CD4-positive, alpha-beta memory T cell (primary cell): ENCODE measurements at regions of chr2 and their contacts with region 1.

Region 1: GRCh38 chr2:203814661-203815540 is 52.7 kb upstream of the CTLA4 start:
- DNase-seq: peak; percentile 53 to 76 (median 72)
- H3K4me3 ChIP-seq: peak overlapping the region in 1 of 2 donors; percentile 21
- H3K4me3 Mint-ChIP-seq: peak overlapping the region; percentile 57 to 86 (median 80)
- H3K27ac ChIP-seq: no peak overlapping the region
- H3K27ac Mint-ChIP-seq: peak overlapping the region; percentile 30 to 86 (median 74)
- H3K4me1 ChIP-seq: peaks cover 49% of the 10 kb centered on the region
- H3K4me1 Mint-ChIP-seq: peaks cover 20 to 54% (median 38%) of the 10 kb centered on the region in 4 donors
- H3K27me3 ChIP-seq: no peaks in the 10 kb centered on the region
- H3K27me3 Mint-ChIP-seq: no peaks in the 10 kb centered on the region

Region 2: GRCh38 chr2:202831242-202832220 is 983.4 kb before region 1 on chr2:
- CTCF ChIA-PET with region 1: interaction called, 4 read pairs
- POLR2A ChIA-PET with region 1: no interaction called
- intact Hi-C with region 1: loop called (anchors 1 kb)
- DNase-seq: peak; percentile 46 to 54 (median 48)
- H3K4me3 ChIP-seq: no peak overlapping the region
- H3K4me3 Mint-ChIP-seq: peak overlapping the region in 4 of 8 donors; percentile 30 to 71 (median 38)
- H3K27ac ChIP-seq: no peak overlapping the region
- H3K27ac Mint-ChIP-seq: peak overlapping the region in 5 of 7 donors; percentile 26 to 91 (median 42)
- H3K4me1 ChIP-seq: peaks cover 9% of the 10 kb centered on the region
- H3K4me1 Mint-ChIP-seq: peaks cover 9 to 11% (median 9%) of the 10 kb centered on the region in 4 donors
- H3K27me3 ChIP-seq: no peaks in the 10 kb centered on the region
- H3K27me3 Mint-ChIP-seq: no peaks in the 10 kb centered on the region

Region 3: GRCh38 chr2:203484266-203485112 is 330.4 kb before region 1 on chr2:
- CTCF ChIA-PET with region 1: interaction called, 118 read pairs
- POLR2A ChIA-PET with region 1: interaction called, 12 read pairs
- intact Hi-C with region 1: loop called (anchors 1 kb)
- DNase-seq: peak; percentile 52 to 62 (median 55)
- H3K4me3 ChIP-seq: no peak overlapping the region
- H3K4me3 Mint-ChIP-seq: no peak overlapping the region
- H3K27ac ChIP-seq: no peak overlapping the region
- H3K27ac Mint-ChIP-seq: peak overlapping the region in 4 of 7 donors; percentile 20 to 84 (median 48)
- H3K4me1 ChIP-seq: peaks cover 7% of the 10 kb centered on the region
- H3K4me1 Mint-ChIP-seq: peaks cover 4 to 6% (median 5%) of the 10 kb centered on the region in 4 donors
- H3K27me3 ChIP-seq: no peaks in the 10 kb centered on the region
- H3K27me3 Mint-ChIP-seq: no peaks in the 10 kb centered on the region

Region 4: DNA sequence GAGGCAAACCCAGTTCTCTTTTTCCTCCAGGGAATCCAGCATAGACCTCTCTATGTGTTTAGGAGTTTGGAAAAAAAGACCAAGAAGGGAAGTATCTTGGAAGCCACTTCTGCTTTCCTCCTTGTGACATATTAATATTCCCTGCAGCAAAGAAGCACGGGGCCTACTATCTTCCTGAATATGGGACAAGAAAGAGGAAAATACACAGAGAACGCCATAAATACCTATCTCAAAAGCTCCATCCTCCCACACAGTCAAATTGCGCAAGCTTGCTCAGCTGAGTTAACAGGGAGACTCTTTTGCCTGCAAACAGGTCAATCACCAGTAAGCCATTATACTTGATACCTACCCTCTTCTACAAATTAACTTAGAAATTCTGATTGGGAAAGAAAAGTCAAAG is 263.1 kb before region 1 on chr2:
- CTCF ChIA-PET with region 1: no interaction called
- POLR2A ChIA-PET with region 1: no interaction called
- intact Hi-C with region 1: no loop called
- DNase-seq: no peak
- H3K4me3 ChIP-seq: no peak overlapping the region
- H3K4me3 Mint-ChIP-seq: no peak overlapping the region
- H3K27ac ChIP-seq: no peak overlapping the region
- H3K27ac Mint-ChIP-seq: no peak overlapping the region
- H3K4me1 ChIP-seq: no peaks in the 10 kb centered on the region
- H3K4me1 Mint-ChIP-seq: peaks cover 0 to 6% (median 4%) of the 10 kb centered on the region in 4 donors
- H3K27me3 ChIP-seq: no peaks in the 10 kb centered on the region
- H3K27me3 Mint-ChIP-seq: peaks cover 0 to 1% of the 10 kb centered on the region in 2 donors

Region 5: DNA sequence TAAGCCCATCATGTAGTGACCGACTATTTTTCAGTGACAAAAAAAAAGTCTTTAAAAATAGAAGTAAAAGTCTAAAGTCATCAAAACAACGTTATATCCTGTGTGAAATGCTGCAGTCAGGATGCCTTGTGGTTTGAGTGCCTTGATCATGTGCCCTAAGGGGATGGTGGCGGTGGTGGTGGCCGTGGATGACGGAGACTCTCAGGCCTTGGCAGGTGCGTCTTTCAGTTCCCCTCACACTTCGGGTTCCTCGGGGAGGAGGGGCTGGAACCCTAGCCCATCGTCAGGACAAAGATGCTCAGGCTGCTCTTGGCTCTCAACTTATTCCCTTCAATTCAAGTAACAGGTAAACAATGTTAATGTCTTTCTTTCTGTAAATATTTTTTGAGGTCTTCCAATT is 108.5 kb before region 1 on chr2 and contains the start of gene CD28:
- CTCF ChIA-PET with region 1: interaction called, 4 read pairs
- POLR2A ChIA-PET with region 1: interaction called, 7 read pairs
- intact Hi-C with region 1: loop called (anchors 2 kb)
- DNase-seq: peak; percentile 94 to 96 (median 94)
- H3K4me3 ChIP-seq: peak within 1 kb of the TSS; percentile 78 to 90
- H3K4me3 Mint-ChIP-seq: peak within 1 kb of the TSS; percentile 86 to 99 (median 92)
- H3K27ac ChIP-seq: peak within 1 kb of the TSS; percentile 94
- H3K27ac Mint-ChIP-seq: peak within 1 kb of the TSS; percentile 93 to 100 (median 99)
- H3K4me1 ChIP-seq: peaks cover 44% of the 10 kb centered on the region
- H3K4me1 Mint-ChIP-seq: peaks cover 42 to 75% (median 55%) of the 10 kb centered on the region in 4 donors
- H3K27me3 ChIP-seq: no peaks in the 10 kb centered on the region
- H3K27me3 Mint-ChIP-seq: no peaks in the 10 kb centered on the region
- total RNA-seq, gene CD28: 203 to 222 TPM

Region 6: DNA sequence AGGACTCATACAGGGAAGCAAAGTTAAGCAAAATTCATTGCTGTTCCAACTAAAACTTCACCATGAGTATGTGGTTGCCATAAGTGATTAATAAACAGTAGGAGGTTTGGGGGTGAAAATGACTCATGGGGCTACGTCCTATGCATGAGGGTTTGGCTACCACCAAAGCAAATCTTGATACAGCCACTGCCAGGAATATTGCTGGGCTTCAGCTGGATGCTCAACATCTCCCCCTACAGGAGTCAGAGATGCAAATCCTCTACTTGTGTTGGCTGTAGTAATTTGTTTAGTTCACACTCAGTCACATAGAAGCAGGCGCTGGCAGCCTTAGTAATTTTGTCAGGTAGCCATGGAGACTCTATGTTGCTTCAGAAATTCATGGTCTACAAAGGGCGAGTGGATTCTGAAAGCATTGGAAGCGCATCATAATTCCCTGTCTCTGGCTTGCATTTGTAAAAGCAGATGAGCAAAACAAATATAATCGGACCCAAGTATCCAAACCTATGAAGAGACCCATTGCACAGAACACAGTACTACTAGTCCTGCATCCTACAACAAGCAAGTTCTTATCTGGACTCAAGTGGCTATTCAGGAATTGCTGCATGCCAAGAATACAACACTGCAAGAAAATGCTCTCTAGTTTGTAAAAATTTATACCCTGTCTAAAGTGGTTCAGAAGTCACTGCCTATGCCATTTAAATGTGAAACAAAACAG is 32.5 kb before region 1 on chr2:
- CTCF ChIA-PET with region 1: interaction called, 59 read pairs
- POLR2A ChIA-PET with region 1: no interaction called
- intact Hi-C with region 1: loop called (anchors 1 kb)
- DNase-seq: peak; percentile 67 to 79 (median 69)
- H3K4me3 ChIP-seq: no peak overlapping the region
- H3K4me3 Mint-ChIP-seq: peak overlapping the region in 3 of 8 donors; percentile 24 to 66 (median 30)
- H3K27ac ChIP-seq: no peak overlapping the region
- H3K27ac Mint-ChIP-seq: peak overlapping the region in 6 of 7 donors; percentile 44 to 85 (median 70)
- H3K4me1 ChIP-seq: peaks cover 20% of the 10 kb centered on the region
- H3K4me1 Mint-ChIP-seq: peaks cover 31 to 55% (median 40%) of the 10 kb centered on the region in 4 donors
- H3K27me3 ChIP-seq: no peaks in the 10 kb centered on the region
- H3K27me3 Mint-ChIP-seq: no peaks in the 10 kb centered on the region

Region 7: DNA sequence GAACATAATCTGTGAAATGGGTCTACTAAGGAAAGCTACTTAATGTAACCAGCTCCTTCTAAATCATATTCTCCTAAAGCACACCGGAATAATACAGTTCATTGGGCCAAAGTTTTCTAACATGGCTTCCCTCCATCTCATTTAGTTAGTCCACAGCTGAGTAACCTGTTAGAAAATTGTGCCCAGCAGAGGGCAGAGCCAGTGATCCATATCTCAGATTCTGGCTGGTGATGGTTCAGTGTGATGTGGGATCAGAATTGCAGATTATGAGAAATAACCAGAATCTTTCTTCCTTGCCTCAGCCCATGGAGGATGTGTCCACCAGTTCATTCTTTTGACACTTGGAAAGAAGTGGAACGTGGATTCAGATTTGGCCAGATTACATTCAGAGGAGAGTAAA is 43.3 kb after region 1 on chr2:
- CTCF ChIA-PET with region 1: interaction called, 16 read pairs
- POLR2A ChIA-PET with region 1: interaction called, 3 read pairs
- intact Hi-C with region 1: no loop called
- DNase-seq: peak in 1 of 5 donors; percentile 38
- H3K4me3 ChIP-seq: no peak overlapping the region
- H3K4me3 Mint-ChIP-seq: peak overlapping the region in 4 of 8 donors; percentile 2 to 47 (median 22)
- H3K27ac ChIP-seq: no peak overlapping the region
- H3K27ac Mint-ChIP-seq: peak overlapping the region in 5 of 7 donors; percentile 6 to 57 (median 36)
- H3K4me1 ChIP-seq: peaks cover 71% of the 10 kb centered on the region
- H3K4me1 Mint-ChIP-seq: peaks cover 49 to 75% (median 52%) of the 10 kb centered on the region in 4 donors
- H3K27me3 ChIP-seq: no peaks in the 10 kb centered on the region
- H3K27me3 Mint-ChIP-seq: no peaks in the 10 kb centered on the region

Region 8: DNA sequence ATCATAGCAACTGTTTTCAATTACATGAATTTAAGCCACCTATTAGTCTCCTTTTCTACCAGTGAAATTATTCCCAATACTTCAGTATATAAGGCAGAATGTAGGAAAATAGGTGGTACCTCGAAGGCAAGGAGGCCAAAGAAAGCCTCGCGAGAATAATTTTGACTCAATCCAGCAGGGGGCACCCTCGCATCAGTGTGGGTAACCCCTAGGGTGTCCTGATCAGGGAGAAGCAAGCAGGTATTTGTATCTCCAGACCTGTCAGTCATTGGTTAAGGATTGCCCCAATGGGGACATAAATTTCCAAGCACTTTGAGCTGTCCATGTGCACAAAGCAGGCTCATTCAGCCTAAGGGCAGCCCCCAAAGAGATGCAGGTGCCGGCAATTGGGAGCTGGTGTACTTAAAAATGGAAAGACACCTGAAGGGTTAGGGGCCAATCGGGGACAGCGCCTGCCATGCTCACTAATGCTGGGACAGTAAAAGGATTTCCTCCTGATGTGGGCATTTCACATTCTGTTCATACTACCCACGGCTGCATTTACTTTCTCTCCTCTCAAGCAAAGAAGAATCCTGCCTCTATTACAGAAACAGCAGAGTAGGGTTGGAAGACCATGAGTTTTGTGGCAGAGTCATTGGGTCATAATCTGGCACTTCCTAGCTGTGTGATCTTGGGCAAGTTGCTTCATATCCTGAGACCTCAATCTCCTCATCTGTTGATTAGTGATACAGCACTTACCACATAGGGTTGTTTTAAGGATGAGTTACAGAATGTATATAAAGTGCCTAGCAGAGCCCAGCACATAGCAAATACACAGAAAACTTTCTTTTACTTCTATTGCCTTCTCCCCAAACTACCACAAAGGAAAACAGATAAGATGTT is 257.8 kb after region 1 on chr2:
- CTCF ChIA-PET with region 1: no interaction called
- POLR2A ChIA-PET with region 1: no interaction called
- intact Hi-C with region 1: no loop called
- DNase-seq: peak in 4 of 5 donors; percentile 34 to 45 (median 36)
- H3K4me3 ChIP-seq: no peak overlapping the region
- H3K4me3 Mint-ChIP-seq: no peak overlapping the region
- H3K27ac ChIP-seq: no peak overlapping the region
- H3K27ac Mint-ChIP-seq: no peak overlapping the region
- H3K4me1 ChIP-seq: no peaks in the 10 kb centered on the region
- H3K4me1 Mint-ChIP-seq: no peaks in the 10 kb centered on the region
- H3K27me3 ChIP-seq: no peaks in the 10 kb centered on the region
- H3K27me3 Mint-ChIP-seq: no peaks in the 10 kb centered on the region